ENCODE measurements at regions of chr22 and their contacts with region 1.

Region 1: DNA sequence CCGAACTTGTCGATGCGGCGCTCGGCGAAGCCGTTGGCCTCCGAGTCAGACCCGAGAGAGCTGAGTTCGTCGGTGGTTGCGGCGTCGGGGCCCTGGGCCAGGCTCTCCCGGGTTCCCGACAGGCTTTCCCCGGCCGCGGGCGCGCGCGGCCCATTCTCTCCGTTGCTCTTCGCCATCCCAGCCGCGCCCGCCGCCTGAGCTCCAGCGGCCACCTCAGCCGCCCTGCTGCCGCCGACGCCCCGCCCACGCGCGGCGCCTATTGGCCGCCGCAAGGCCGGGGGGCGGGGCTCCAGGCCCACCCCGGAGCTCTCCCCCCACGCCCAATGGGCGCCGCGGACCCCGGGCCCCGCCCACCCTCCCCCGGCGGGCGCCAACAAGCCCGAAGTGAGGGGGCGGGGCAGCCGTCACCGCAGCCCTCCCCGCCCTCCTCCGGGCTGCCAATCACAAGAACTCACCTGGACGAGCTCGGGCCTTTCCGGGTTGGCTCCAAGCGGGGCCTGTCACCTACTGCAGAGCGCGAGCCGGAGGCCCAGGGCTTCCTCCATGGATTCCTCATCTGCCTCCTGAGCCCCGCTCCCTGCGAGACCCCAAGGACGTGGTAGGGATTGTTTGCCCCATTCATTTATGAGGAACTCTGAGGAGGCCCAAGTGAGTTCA is at the start of gene TBC1D10A:
- DNase-seq: peak; percentile 96
- H3K4me3 Mint-ChIP-seq: peak within 1 kb of the TSS; percentile 83
- H3K27ac Mint-ChIP-seq: peak within 1 kb of the TSS; percentile 81
- H3K4me1 Mint-ChIP-seq: peaks cover 42% of the 10 kb centered on the region
- H3K27me3 Mint-ChIP-seq: no peaks in the 10 kb centered on the region
- total RNA-seq, gene TBC1D10A: 28.9 to 29.0 TPM

Region 2: GRCh38 chr22:30305519-30305905 is 21.3 kb before region 1 on chr22:
- CTCF ChIA-PET with region 1: interaction called, 6 read pairs
- POLR2A ChIA-PET with region 1: interaction called, 8 read pairs
- intact Hi-C with region 1: loop called (anchors 2 kb)
- DNase-seq: peak; percentile 74
- H3K4me3 Mint-ChIP-seq: peak overlapping the region; percentile 69
- H3K27ac Mint-ChIP-seq: peak overlapping the region; percentile 98
- H3K4me1 Mint-ChIP-seq: peaks cover 96% of the 10 kb centered on the region
- H3K27me3 Mint-ChIP-seq: no peaks in the 10 kb centered on the region

Region 3: GRCh38 chr22:30356449-30357235 is 29.8 kb after region 1 on chr22 and contains the starts of genes CCDC157 and SF3A1:
- CTCF ChIA-PET with region 1: interaction called, 4 read pairs
- POLR2A ChIA-PET with region 1: interaction called, 11 read pairs
- intact Hi-C with region 1: loop called (anchors 2 kb)
- DNase-seq: peak; percentile 91
- H3K4me3 Mint-ChIP-seq: peak within 1 kb of the TSS; percentile 93
- H3K27ac Mint-ChIP-seq: peak within 1 kb of the TSS; percentile 85
- H3K4me1 Mint-ChIP-seq: peaks cover 48% of the 10 kb centered on the region
- H3K27me3 Mint-ChIP-seq: no peaks in the 10 kb centered on the region
- total RNA-seq, gene CCDC157: 2.1 to 2.9 TPM
- total RNA-seq, gene SF3A1: 255 to 273 TPM

Measured in activated CD4-positive, alpha-beta memory T cell treated with anti-CD3 and anti-CD28 coated beads for 36 hours (primary cell).